Activated B cell treated with CpG ODN at 0.5 μM for 24 hours (primary cell): ENCODE measurements at regions of chr12 and their contacts with region 1.

Region 1: DNA sequence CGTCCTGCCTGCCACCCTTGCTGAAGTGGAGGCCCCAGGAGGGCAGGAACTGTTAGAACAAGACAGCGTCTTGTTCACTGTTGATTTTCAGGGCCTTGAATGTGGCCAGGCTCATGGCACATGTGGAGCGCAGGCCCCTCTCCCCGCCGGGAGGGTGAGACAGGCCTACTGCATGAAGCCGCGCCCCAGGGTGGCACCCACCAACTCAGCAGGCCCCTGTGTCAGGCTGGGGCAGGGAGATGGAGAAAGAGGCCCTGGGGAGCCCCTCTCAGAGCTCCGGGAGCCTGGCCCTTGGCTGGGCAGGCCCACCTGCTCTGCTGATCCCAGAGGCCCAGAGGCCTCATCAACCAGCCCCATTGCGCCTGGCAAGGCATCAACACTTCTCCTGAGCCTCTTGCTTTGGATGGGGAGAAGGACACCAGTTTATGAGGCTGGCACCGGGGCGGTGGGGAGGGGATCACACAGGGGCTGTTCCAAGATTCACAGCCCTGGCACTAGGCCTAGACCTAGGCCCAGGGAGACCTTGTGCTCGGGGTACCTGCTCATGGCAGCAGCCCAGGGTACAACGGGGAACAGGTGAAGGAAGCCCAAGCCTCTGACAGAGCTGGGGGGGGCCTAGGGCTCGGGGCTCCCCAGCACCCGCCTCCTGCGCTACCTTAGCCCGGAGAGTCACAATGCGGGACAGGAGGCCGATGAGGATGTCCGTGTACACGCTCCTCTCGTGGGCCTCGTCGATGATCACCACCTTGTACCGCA is 18.1 kb downstream of the DHX37 start:
- DNase-seq: no peak
- ATAC-seq: no peak
- H3K4me3 Mint-ChIP-seq: no peak overlapping the region
- H3K27ac Mint-ChIP-seq: no peak overlapping the region
- H3K4me1 Mint-ChIP-seq: no peaks in the 10 kb centered on the region
- H3K27me3 Mint-ChIP-seq: no peaks in the 10 kb centered on the region
- CTCF ChIP-seq: no peak

Region 2: DNA sequence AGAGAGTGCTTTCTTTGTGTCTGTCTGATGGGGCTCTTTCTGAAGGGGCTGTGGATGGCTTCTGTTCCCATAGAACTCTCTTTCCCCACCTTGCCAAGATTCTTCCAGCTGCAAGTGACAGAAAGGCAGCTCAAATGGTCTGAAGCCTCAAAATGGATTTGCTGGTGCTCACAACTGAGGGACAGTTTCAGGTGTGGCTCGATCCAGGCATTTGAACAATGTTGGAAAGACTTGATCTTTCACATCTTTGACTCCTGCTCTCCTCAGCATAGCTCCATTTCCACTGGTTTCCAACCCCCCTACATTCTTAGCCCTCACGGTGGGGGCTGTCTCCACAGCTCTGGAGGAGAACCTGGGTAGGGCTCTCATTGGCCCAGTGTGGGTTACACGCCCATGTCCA is 660.0 kb before region 1 on chr12:
- CTCF ChIA-PET with region 1: no interaction called
- POLR2A ChIA-PET with region 1: interaction called, 10 read pairs
- intact Hi-C with region 1: no loop called
- DNase-seq: no peak
- ATAC-seq: no peak
- H3K4me3 Mint-ChIP-seq: no peak overlapping the region
- H3K27ac Mint-ChIP-seq: no peak overlapping the region
- H3K4me1 Mint-ChIP-seq: no peaks in the 10 kb centered on the region
- H3K27me3 Mint-ChIP-seq: no peaks in the 10 kb centered on the region
- CTCF ChIP-seq: no peak

Region 3: DNA sequence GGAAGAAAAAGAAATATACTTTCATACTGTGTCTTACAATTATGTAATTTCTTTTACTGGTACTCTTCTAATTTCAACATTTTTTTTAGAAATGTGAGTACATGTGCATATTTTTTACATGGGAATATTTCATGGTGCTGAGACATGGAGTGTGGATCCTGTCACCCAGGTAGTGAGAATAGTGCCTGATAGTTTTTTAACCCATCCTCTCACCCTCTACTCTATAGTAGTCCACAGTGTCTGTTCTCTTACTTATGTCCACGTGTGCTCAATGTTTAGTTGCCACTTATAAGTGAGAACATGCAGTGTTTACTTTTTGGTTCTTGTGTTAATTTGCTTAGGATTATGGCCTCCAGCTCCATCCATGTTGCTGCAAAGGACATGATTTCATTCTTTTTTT is 643.2 kb after region 1 on chr12:
- CTCF ChIA-PET with region 1: no interaction called
- POLR2A ChIA-PET with region 1: no interaction called
- intact Hi-C with region 1: no loop called
- DNase-seq: no peak
- ATAC-seq: no peak
- H3K4me3 Mint-ChIP-seq: no peak overlapping the region
- H3K27ac Mint-ChIP-seq: no peak overlapping the region
- H3K4me1 Mint-ChIP-seq: no peaks in the 10 kb centered on the region
- H3K27me3 Mint-ChIP-seq: no peaks in the 10 kb centered on the region
- CTCF ChIP-seq: no peak